Mammary epithelial cell (primary cell): ENCODE measurements at regions of chr11 and their contacts with region 1.

Region 1: GRCh38 chr11:110582728-110583432 is 129.4 kb downstream of the ARHGAP20 start:
- DNase-seq: peak; percentile 3
- H3K4me3 ChIP-seq: no peak overlapping the region
- H3K27ac ChIP-seq: no peak overlapping the region
- H3K4me1 ChIP-seq: no peaks in the 10 kb centered on the region
- H3K27me3 ChIP-seq: peaks cover 5% of the 10 kb centered on the region
- CTCF ChIP-seq: peak in 1 of 2 donors; percentile 15

Region 2: DNA sequence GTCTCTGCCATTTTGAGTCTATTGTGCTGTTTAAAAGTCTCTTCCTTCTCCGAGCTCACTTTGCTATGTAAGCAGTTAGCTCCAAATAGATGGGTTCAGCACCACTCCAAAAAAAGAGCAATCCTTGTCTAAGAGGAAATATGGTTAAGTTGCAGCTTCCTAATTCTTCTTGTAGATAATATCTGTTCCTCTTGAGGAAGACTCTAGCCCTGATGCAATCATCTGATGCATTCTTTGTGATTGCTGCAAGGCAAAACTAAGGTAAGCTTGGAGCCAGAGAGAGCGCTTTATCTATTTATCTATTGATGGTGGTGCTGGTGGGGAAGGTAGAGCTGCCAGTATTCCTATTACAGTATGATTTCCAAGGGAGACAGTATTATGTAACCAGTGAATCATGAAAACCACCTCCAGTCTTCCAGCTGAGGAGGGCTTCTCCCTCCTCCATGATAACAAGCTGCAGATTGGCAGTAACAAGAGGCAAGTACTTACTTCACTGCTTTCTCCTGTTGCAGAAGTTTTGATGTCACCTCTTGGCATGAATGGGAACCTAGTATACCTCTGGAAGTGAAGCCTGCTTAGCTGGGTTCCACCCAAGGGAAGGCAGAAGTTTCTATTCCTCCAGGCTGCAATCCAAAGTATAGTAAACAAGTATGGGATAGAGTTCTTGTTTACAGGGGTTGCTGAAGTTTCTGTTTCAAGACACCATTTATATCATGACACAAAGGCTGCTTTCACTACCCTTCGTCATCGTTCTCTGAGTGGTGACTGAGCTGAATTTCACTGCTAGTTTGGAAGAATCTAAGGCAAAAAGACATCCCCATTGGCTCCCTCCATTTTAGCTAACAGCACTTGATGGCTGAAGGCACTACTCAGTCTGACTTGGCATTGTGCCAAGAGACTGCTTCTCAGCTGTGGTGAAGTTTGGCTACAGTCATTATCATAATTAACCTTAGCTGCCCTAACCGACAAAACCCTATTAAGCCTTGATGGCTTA is 103.5 kb before region 1 on chr11:
- CTCF ChIA-PET with region 1: no interaction called
- dilution Hi-C with region 1: loop called (anchors 5 kb)
- in situ Hi-C with region 1: no loop called
- intact Hi-C with region 1: no loop called
- DNase-seq: peak; percentile 62
- H3K4me3 ChIP-seq: no peak overlapping the region
- H3K27ac ChIP-seq: no peak overlapping the region
- H3K4me1 ChIP-seq: peaks cover 9% of the 10 kb centered on the region
- H3K27me3 ChIP-seq: no peaks in the 10 kb centered on the region
- CTCF ChIP-seq: no peak

Region 3: DNA sequence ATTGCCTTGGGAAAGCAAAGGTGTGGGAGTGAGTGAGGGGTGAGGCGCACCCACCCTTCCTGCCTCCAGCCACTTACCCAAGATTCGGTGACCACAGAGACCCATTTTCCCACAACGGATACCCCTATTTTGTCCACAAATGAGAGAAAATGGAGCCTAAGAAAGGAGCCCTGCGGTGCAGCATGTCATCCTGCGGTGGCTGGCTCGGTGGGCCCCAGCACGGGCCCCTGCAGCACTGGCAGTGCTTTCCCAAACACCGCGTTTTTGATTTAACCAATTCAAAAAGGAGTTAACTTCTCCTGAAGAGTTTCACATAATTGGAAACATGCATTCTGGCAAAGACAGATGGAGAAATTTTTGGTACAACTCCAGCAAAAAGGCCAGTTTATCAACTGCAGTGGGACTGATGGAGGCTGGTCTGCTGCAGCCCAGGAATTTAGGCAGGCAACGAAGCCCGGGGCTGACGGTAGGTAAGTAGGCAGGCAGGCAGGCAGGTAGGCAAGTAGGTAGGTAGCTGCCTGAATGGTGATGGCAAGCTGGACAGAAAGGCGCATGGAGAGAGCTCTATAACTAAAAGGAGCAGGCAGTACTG is 68.9 kb before region 1 on chr11:
- CTCF ChIA-PET with region 1: no interaction called
- dilution Hi-C with region 1: loop called (anchors 5 kb)
- in situ Hi-C with region 1: no loop called
- intact Hi-C with region 1: no loop called
- DNase-seq: no peak
- H3K4me3 ChIP-seq: no peak overlapping the region
- H3K27ac ChIP-seq: no peak overlapping the region
- H3K4me1 ChIP-seq: no peaks in the 10 kb centered on the region
- H3K27me3 ChIP-seq: no peaks in the 10 kb centered on the region
- CTCF ChIP-seq: no peak